ENCODE measurements at regions of chr20 and their contacts with region 1.

Region 1: GRCh38 chr20:44609511-44610312 is 27.3 kb downstream of the PKIG start:
- DNase-seq: peak; percentile 90

Region 2: DNA sequence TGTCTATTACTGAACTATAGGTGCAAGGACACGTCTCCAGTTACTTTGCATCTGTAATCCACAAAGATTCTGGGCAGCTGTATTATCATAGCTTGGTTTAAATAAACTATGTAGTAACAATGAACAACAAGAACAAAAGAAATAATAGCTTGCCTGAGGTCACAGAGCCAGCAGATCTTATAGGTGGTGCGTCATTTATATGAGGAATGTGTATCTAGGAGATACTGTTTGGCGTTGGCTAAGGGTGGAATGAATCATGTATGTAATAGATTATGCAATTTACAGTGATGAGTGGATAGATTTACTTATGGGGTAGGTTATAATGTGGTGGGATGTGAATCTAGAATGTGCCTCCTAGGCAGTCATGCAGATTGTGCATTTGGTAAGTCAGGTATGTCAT is 211.4 kb before region 1 on chr20:
- in situ Hi-C with region 1: loop called (anchors 10 kb)
- DNase-seq: no peak

Region 3: GRCh38 chr20:44496976-44497375 is 112.7 kb before region 1 on chr20:
- in situ Hi-C with region 1: no loop called
- DNase-seq: peak; percentile 76

Region 4: GRCh38 chr20:44513871-44514270 is 95.8 kb before region 1 on chr20:
- in situ Hi-C with region 1: no loop called
- DNase-seq: no peak

Region 5: DNA sequence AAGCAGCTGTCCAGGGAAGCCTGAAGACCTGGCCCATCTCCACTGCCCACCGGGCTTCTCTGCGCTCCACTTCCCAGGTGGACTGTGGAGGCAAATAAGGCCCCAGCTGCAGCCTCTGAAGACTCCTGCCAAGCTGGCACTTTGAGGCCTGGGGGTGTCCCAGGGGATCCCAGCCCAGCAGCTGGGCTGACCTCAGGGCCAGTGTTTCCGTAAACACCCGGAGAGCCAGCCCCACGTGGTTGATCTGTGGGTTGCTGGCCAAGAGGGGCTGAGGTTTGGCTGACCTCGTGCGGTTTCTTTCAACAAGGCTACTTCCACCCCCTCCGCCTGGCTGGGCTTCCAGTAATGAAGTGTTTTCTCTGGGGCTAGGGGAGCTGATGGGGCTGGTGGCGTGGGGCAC is 93.1 kb after region 1 on chr20:
- in situ Hi-C with region 1: no loop called
- DNase-seq: no peak

Measured in Caki2 (cell line).